AG04449 (cell line): ENCODE measurements at regions of chr7 and their contacts with region 1.

Region 1: GRCh38 chr7:128209229-128210035 is 31.6 kb upstream of the LEP start:
- DNase-seq: no peak
- H3K4me3 ChIP-seq: no peak overlapping the region
- CTCF ChIP-seq: peak; percentile 97

Region 2: GRCh38 chr7:126803060-126803665 is 1406.3 kb before region 1 on chr7:
- CTCF ChIA-PET with region 1: interaction called, 13 read pairs
- POLR2A ChIA-PET with region 1: no interaction called
- DNase-seq: peak; percentile 4
- H3K4me3 ChIP-seq: no peak overlapping the region
- CTCF ChIP-seq: peak; percentile 45

Region 3: GRCh38 chr7:127708788-127709187 is 500.6 kb before region 1 on chr7:
- CTCF ChIA-PET with region 1: interaction called, 223 read pairs
- POLR2A ChIA-PET with region 1: no interaction called
- DNase-seq: peak; percentile 53
- H3K4me3 ChIP-seq: no peak overlapping the region
- CTCF ChIP-seq: peak; percentile 69

Region 4: GRCh38 chr7:128031901-128032604 is 177.4 kb before region 1 on chr7:
- CTCF ChIA-PET with region 1: interaction called, 28 read pairs
- POLR2A ChIA-PET with region 1: interaction called, 3 read pairs
- DNase-seq: peak; percentile 65
- H3K4me3 ChIP-seq: peak overlapping the region; percentile 53
- CTCF ChIP-seq: peak; percentile 43

Region 5: DNA sequence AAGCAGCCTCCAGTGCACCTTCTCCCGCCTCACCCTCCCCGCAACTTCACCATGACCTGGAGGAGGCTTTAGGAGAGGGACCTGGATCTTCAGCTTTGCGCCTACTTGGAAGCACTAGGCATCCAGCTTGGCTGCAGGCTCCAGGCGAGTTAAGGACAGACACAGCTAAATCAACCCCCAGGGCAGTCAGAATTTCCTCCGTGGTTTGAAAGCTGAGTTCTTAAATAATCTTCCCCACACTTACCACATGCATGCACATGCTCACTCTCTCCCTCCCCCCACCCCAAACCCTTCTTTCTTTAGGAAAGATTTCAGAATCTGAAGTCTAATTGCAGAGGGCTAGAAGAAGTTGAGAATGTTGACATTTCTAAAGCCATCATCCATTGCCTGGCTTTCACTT is 141.4 kb before region 1 on chr7:
- CTCF ChIA-PET with region 1: interaction called, 11 read pairs
- POLR2A ChIA-PET with region 1: no interaction called
- DNase-seq: peak; percentile 19
- H3K4me3 ChIP-seq: no peak overlapping the region
- CTCF ChIP-seq: no peak

Region 6: DNA sequence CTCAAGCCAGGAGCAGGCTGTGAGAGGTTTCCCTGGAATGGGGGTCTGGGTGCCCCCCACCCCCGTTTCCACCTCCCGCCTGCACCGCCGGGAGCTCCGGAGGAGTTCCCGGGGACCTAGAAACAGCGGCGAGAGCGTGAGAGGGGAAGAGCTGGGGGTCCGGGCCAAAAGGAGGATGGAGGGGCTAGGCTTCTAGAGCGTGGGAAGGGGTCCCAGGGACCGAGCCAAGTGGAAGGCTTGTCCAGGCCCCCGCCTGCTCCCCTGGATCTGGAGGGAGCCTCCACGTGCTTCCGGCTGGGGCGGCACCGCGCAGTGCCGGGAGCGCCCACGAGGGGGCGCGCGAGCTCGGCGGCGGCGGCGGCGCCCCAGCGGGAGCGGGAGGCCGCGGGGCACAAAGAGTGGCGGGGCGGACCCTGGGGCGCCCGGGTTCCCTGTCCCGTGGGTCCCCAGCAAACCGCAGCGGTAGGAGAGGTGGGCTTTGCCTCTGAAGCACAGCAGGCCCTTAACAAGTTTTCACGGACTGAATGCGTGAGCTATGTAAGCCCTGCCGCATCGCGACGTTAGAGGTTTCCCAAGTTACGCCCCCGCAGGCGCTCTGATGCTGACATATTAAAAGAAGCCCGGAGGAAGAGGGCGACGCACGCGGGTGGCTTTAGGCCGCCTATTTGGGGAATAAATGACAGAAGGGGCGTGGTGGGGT is 73.8 kb before region 1 on chr7:
- CTCF ChIA-PET with region 1: interaction called, 76 read pairs
- POLR2A ChIA-PET with region 1: no interaction called
- DNase-seq: no peak
- H3K4me3 ChIP-seq: peak overlapping the region; percentile 65
- CTCF ChIP-seq: peak; percentile 68